Right ventricle myocardium inferior (tissue), 1 donor: ENCODE measurements at regions of chr2 and their contacts with region 1.

Region 1: DNA sequence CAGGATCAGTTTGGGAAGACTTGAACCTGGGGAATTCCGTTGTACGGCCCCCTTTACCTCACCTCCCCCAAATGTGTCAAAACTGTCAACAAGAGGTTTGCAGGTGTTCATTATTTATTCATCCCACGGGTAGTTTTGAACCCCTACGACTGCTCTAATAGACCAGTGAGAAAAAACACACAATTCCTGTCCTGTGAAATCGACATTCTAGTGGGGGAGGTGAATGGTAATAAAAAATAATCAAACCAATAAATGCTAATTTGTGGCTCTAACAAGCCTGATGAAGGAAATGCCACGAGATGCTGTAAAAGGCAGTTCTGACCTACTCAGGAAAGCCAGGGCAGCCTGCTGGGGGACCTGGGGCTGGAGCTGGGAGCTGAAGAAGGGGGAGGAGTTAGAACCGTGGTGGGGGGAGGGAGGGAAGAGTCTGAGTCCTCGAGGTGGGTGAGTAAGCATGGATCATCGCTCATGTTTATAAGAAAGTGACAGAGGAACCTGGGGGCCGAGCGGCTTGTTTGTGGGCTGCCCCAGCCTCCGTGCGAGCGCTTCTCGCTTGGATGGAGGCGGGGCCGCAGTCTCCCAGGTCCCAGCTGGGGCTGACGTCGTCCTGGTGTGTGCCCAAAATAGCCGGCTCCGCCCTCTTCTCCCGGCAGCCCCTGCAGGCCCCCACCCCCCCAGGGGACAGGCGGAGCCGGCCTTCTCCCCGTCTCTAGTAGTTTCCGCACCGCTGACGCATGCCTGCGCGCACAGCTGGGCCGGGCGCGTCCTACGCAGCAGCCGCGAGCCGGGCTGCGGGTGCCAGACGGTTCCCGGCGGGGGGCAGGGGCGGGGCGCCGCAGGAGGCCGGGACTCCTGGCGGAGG is at the start of gene DNAJB2:
- DNase-seq: peak; percentile 100
- ATAC-seq: peak; percentile 97
- total RNA-seq, gene DNAJB2: 80.4 TPM

Region 2: GRCh38 chr2:219206442-219207253 is 72.2 kb before region 1 on chr2 and contains the start of gene ZFAND2B:
- intact Hi-C with region 1: loop called (anchors 1 kb)
- DNase-seq: peak; percentile 98
- ATAC-seq: peak; percentile 98
- total RNA-seq, gene ZFAND2B: 24.3 TPM

Region 3: DNA sequence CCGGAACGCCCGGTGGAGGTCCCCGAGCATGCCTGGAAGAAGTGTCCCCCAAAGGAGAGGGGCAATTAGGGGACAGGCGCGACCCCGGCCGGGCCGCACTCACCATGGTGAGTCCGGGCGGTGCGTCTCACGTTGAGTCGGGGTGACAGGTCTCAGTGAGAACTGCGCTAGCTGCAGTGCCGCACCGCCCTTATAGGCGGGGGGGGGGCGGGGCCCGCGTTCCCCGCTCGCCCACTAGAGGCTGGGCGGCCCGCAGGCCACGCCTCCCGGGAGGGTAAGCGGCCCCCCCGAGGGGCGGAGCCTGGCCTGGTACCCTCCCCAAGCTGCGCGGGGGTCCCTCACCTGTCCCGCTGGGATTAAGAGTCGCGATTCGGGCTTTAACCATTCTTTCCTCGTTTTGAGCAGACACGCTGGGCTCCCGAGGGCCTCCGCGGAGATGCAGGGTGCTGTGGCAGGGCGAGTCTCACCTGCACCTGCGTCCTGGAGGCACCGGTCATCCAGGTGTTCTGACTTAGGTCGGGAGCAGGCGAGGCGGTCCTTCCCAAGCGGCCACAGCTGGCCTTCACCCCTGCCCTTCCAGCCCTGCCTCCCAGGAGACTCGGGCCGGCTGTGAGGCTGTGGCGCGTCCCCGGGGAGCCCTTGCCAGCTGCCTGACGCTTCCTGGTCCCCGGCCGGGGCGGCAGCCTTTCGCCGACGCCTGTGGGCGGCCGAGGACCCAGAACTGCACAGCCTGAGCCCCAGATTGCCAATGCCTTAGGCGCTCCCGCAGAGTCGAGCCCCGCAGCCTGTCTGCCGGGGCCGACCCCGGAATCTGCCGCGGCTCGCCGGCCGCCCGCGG is 24.9 kb before region 1 on chr2 and contains the start of gene TUBA4A:
- intact Hi-C with region 1: loop called (anchors 2 kb)
- DNase-seq: peak; percentile 95
- ATAC-seq: peak; percentile 92
- total RNA-seq, gene TUBA4A: 128 TPM

Region 4: DNA sequence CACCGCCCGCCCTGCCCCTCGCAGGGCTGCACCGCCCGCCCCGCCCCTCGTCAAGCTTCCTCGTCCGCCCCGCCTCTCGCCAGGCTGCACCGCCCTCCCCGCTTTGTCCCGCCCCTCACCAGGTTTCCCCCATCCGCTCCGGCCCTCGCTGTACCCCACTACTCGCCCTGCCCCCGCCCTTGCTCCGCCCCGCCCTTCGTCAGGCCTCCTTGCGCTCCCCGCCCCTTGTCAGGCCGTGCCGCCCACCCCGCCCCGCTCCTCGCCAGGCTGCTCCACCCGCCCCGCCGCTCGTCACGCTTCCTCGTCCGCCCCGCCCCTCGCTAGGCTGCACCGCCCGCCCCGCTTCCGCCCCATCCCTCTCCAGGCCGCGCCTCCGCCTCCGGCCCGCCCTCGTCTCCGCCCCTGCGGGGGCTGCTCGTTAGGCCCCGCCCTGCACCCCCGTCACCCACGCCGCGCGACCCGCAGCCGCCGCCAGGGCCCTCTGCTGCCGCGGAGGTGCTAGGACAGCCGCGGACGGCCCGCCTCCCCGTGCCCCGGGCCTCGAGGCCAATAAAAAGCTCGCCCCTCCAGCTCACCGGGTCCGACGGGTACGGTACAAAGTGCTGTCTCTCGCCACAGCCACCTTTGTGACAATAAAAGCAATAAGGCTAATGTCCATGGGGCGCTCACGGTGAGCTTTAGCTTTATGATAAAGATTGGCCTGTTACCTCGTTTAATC is 109.4 kb after region 1 on chr2:
- intact Hi-C with region 1: loop called (anchors 5 kb)
- DNase-seq: peak; percentile 99
- ATAC-seq: peak; percentile 90